ENCODE measurements at regions of chr3 and their contacts with region 1.

Region 1: GRCh38 chr3:157220211-157220610 is 60.3 kb upstream of the CCNL1 start:
- DNase-seq: no peak
- ATAC-seq: no peak
- H3K4me3 Mint-ChIP-seq: no peak overlapping the region
- H3K27ac Mint-ChIP-seq: no peak overlapping the region
- H3K4me1 Mint-ChIP-seq: no peaks in the 10 kb centered on the region
- H3K27me3 Mint-ChIP-seq: no peaks in the 10 kb centered on the region
- CTCF ChIP-seq: no peak

Region 2: DNA sequence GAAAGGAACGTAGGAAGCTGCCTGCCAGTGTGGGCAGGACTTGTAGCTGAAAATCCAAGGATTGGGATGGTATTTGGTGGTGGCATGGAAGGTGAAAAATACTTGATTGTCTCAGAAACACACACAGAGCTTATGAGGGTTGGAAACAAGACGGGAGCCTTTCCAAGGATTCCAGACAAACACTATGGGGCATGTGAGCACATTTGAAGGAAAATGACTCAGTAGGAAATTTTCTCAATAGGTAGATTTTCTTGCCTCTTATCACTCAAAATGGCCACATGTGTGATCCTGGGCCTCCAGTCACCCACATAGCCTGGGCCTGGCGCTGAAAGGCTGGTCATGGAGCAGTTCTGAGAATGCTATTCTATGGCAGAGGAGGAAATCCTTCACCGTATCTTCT is 107.7 kb before region 1 on chr3:
- CTCF ChIA-PET with region 1: no interaction called
- POLR2A ChIA-PET with region 1: interaction called, 15 read pairs
- DNase-seq: no peak
- ATAC-seq: no peak
- H3K4me3 Mint-ChIP-seq: no peak overlapping the region
- H3K27ac Mint-ChIP-seq: no peak overlapping the region
- H3K4me1 Mint-ChIP-seq: peaks cover 10% of the 10 kb centered on the region
- H3K27me3 Mint-ChIP-seq: no peaks in the 10 kb centered on the region; the same call in 1 of the 2 replicates
- CTCF ChIP-seq: no peak